Activated CD8-positive, alpha-beta T cell treated with anti-CD3 and anti-CD28 coated beads for 36 hours (primary cell): ENCODE measurements at regions of chr2 and their contacts with region 1.

Region 1: GRCh38 chr2:174697255-174697654 is 67.0 kb downstream of the CHRNA1 start:
- DNase-seq: peak; percentile 80
- ATAC-seq: peak; percentile 99
- H3K4me3 Mint-ChIP-seq: no peak overlapping the region
- H3K27ac Mint-ChIP-seq: no peak overlapping the region
- H3K4me1 Mint-ChIP-seq: no peaks in the 10 kb centered on the region
- H3K27me3 Mint-ChIP-seq: no peaks in the 10 kb centered on the region
- CTCF ChIP-seq: peak; percentile 90

Region 2: GRCh38 chr2:174612970-174613369 is 84.3 kb before region 1 on chr2:
- CTCF ChIA-PET with region 1: no interaction called
- POLR2A ChIA-PET with region 1: no interaction called
- intact Hi-C with region 1: no loop called
- DNase-seq: no peak
- ATAC-seq: no peak
- H3K4me3 Mint-ChIP-seq: no peak overlapping the region
- H3K27ac Mint-ChIP-seq: peak overlapping the region; percentile 5
- H3K4me1 Mint-ChIP-seq: peaks cover 92% of the 10 kb centered on the region
- H3K27me3 Mint-ChIP-seq: no peaks in the 10 kb centered on the region
- CTCF ChIP-seq: no peak

Region 3: GRCh38 chr2:174682578-174683391 is 14.5 kb before region 1 on chr2:
- CTCF ChIA-PET with region 1: interaction called, 147 read pairs
- POLR2A ChIA-PET with region 1: interaction called, 11 read pairs
- intact Hi-C with region 1: no loop called
- DNase-seq: peak; percentile 57
- ATAC-seq: peak; percentile 70
- H3K4me3 Mint-ChIP-seq: peak overlapping the region; percentile 88
- H3K27ac Mint-ChIP-seq: peak overlapping the region; percentile 92
- H3K4me1 Mint-ChIP-seq: peaks cover 62% of the 10 kb centered on the region
- H3K27me3 Mint-ChIP-seq: no peaks in the 10 kb centered on the region
- CTCF ChIP-seq: no peak

Region 4: DNA sequence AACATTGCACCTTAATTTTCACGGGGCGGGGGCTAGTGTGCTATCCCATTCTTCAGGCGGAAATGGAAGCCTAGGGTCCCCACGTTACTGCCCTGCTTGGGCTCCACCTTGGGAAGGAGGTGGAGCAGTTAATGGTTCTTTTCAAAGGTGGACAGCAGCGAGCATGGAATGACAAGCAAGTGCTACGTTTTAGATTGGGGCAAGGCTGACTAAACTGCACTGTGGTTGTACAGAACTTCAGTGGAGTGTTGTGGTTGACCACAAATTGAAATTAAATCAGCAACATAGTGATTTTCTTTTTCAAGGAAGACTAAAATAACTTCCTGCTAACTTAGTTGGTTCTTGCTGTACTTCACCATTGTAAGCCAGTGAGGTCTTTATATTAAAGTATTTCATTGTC is 20.0 kb after region 1 on chr2:
- CTCF ChIA-PET with region 1: interaction called, 96 read pairs
- POLR2A ChIA-PET with region 1: interaction called, 6 read pairs
- intact Hi-C with region 1: no loop called
- DNase-seq: peak; percentile 28
- ATAC-seq: peak; percentile 59
- H3K4me3 Mint-ChIP-seq: no peak overlapping the region
- H3K27ac Mint-ChIP-seq: no peak overlapping the region
- H3K4me1 Mint-ChIP-seq: peaks cover 26% of the 10 kb centered on the region
- H3K27me3 Mint-ChIP-seq: peaks cover 1% of the 10 kb centered on the region
- CTCF ChIP-seq: no peak

Region 5: DNA sequence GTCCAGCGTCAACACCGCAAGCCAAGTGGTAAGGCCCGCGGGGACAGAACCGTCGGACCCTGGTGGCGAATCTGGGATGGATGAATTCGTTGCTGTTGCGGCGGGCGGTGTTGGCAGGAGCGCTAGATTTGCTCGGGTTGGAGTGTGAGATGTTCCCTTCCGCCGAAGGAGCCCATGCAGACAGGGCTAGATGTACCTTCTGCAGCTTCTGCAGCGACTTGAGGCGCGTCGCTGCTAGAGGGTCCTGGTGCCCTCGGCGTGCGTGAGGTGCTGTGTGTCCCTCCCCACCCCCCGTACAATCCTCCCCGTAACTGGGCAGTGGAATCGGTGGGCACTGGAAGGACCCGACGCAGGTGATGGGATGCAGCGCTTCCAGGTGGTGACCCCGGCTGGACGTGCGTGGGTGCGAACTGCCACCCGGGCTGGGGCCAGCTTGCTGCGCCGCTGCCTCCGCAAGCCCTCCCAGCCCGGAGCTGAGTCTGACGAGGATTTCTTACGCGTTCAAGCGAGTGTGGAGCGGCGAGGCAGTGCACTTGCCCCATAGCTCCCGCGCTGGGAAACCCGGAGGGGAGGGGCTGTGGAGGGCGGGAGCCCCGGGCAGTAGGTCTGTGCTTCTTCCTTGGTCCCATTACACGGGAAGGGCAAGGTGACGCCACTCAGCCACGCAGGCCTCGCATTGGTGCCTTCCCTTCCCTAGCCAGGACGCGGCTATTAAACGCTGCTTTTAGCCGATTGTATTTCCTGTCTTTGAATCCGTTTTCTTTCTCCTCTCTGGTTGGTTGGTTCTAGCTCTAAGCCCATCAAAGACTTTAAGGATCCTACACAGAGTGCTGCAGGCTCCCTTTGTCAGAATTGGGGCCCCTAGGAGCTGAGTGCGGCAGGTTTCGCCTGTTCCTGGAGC is 32.8 kb after region 1 on chr2:
- CTCF ChIA-PET with region 1: interaction called, 18 read pairs
- POLR2A ChIA-PET with region 1: no interaction called
- intact Hi-C with region 1: no loop called
- DNase-seq: peak; percentile 71
- ATAC-seq: peak; percentile 90
- H3K4me3 Mint-ChIP-seq: peak overlapping the region; percentile 78
- H3K27ac Mint-ChIP-seq: peak overlapping the region; percentile 62
- H3K4me1 Mint-ChIP-seq: peaks cover 20% of the 10 kb centered on the region
- H3K27me3 Mint-ChIP-seq: peaks cover 10% of the 10 kb centered on the region
- CTCF ChIP-seq: no peak

Region 6: DNA sequence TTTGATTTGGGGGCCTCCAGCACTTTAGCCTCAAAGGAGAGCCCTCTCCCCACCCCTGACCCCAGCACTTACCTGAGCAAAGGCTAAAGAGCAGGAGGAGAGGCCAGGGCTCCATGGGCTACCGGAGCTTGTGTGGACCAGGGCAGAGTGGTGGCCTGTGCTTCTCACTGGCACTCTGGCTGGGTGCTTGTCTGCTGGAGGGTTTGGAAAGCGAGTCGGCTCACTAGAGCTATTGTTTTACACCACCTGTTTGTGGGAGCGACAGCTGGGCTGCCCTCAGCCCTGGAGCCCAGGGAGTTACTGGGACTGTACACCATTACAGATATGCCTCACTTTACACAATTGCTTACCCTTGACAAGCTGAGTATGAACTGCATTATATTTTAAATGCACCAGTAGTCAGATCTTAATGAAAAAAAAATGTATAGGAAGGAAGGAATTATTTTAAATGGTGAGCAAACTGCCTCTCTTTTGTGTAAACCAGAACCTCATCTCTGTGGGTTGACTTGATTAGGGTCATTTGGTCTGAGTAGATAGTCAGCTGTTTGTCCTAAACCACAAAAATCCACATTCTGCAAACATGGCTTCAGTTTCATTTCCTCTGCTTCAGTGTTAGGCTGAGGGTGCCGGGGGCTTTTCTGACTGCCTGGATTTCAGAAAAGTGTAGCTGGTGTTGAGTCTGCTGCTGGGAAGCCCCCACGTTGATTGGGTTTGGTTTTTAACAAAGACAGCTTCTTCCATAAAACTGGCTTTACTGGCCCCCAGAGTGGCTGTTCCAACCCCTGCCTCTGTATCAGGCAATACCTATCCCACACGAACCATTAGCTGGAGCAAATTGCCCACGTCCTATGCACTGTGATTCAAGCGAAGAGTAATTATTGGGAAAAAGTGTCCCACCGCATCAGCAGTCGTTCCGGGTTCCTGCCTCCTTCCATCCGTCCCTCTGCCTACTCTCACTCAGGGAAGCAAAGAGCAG is 67.3 kb after region 1 on chr2 and contains the start of gene CHRNA1:
- CTCF ChIA-PET with region 1: interaction called, 57 read pairs
- POLR2A ChIA-PET with region 1: no interaction called
- intact Hi-C with region 1: no loop called
- DNase-seq: no peak
- ATAC-seq: no peak
- H3K4me3 Mint-ChIP-seq: no peak within 1 kb of the TSS
- H3K27ac Mint-ChIP-seq: no peak within 1 kb of the TSS
- H3K4me1 Mint-ChIP-seq: peaks cover 9% of the 10 kb centered on the region
- H3K27me3 Mint-ChIP-seq: no peaks in the 10 kb centered on the region
- CTCF ChIP-seq: no peak
- total RNA-seq, gene CHRNA1: not detected

Region 7: GRCh38 chr2:174985630-174986029 is 288.4 kb after region 1 on chr2:
- CTCF ChIA-PET with region 1: interaction called, 35 read pairs
- POLR2A ChIA-PET with region 1: interaction called, 6 read pairs
- intact Hi-C with region 1: loop called (anchors 5 kb)
- DNase-seq: no peak
- ATAC-seq: no peak
- H3K4me3 Mint-ChIP-seq: no peak overlapping the region
- H3K27ac Mint-ChIP-seq: no peak overlapping the region
- H3K4me1 Mint-ChIP-seq: peaks cover 6% of the 10 kb centered on the region
- H3K27me3 Mint-ChIP-seq: peaks cover 4% of the 10 kb centered on the region
- CTCF ChIP-seq: peak; percentile 41